Activated CD4-positive, alpha-beta memory T cell treated with anti-CD3 and anti-CD28 coated beads for 36 hours (primary cell): ENCODE measurements at regions of chr17 and their contacts with region 1.

Region 1: GRCh38 chr17:72725433-72726068 is 366.9 kb downstream of the SLC39A11 start:
- DNase-seq: peak; percentile 71
- H3K4me3 Mint-ChIP-seq: no peak overlapping the region
- H3K27ac Mint-ChIP-seq: no peak overlapping the region
- H3K4me1 Mint-ChIP-seq: peaks cover 39% of the 10 kb centered on the region
- H3K27me3 Mint-ChIP-seq: no peaks in the 10 kb centered on the region

Region 2: DNA sequence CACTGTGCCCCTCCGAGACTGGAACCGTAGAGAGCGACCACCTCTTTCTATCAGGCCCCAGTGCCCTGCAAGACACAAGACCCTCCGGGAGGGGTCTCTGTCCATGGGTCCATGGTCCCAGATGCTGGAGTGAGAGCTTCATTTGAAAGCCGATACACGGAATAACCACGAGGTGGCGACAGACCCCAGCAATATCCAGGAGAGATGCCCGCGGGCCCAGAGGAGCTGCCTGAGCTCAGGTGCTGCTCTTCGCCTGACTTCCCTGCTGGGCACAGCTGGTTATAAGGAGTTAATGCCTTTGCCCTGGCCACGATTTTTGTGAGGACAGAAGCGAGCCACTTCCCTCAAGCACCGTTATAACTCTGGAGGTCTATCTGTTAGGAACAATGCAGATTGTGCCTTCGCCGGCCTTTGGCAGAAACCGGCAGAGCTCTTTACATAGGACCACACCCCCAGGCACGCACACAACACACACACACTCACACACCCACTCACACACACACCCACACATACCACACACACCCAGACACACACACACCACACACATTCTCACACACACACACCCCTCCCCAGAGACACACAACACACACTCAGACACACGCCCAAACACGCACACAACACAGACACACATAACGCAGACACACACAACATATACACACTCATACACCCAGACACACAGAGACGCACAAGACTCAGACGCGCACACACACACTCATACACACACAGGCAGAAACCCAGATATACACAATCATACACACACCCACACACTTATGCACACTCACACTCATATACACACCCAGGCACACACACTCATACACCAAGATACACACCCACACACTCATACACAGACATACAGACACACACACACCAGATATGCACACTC is 168.4 kb before region 1 on chr17:
- CTCF ChIA-PET with region 1: interaction called, 196 read pairs
- POLR2A ChIA-PET with region 1: no interaction called
- intact Hi-C with region 1: loop called (anchors 1 kb)
- DNase-seq: peak; percentile 79
- H3K4me3 Mint-ChIP-seq: no peak overlapping the region
- H3K27ac Mint-ChIP-seq: no peak overlapping the region
- H3K4me1 Mint-ChIP-seq: no peaks in the 10 kb centered on the region
- H3K27me3 Mint-ChIP-seq: peaks cover 1% of the 10 kb centered on the region

Region 3: GRCh38 chr17:72931163-72931562 is 205.6 kb after region 1 on chr17:
- CTCF ChIA-PET with region 1: no interaction called
- POLR2A ChIA-PET with region 1: no interaction called
- intact Hi-C with region 1: loop called (anchors 5 kb)
- DNase-seq: peak; percentile 40
- H3K4me3 Mint-ChIP-seq: no peak overlapping the region
- H3K27ac Mint-ChIP-seq: no peak overlapping the region
- H3K4me1 Mint-ChIP-seq: peaks cover 21% of the 10 kb centered on the region
- H3K27me3 Mint-ChIP-seq: no peaks in the 10 kb centered on the region

Region 4: DNA sequence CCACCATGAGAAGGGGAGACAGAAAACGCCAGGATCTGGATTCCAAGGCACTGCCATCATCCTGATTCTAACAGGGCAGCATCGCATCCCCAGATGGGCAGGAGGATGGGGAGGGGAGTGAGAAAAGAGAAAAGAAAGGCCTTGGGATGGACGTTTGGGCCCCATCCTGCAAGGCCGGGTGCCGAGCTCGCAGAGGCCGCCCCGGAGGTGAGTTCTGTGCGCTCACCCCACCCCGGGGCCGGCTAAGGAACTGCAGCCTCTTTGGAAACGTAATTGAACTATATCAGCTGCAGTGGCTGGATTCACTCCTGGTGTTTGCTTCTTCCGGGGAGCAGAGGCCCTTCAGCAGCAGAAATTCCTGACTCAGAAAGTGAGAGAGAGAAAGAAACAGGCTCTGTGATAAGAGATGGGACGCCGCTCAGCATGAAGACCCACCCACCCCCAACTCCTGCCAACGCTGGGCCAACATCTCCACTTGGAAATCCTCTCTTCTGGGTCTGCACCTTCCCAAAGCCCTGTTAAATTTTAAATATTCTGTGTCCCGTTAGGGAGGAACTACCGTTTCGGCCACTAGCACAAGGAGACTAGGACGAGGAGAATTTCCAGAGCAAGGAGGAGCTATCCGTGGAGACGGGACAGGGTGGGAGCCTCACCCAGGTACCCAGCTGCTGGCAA is 430.8 kb after region 1 on chr17:
- CTCF ChIA-PET with region 1: interaction called, 100 read pairs
- POLR2A ChIA-PET with region 1: interaction called, 3 read pairs
- intact Hi-C with region 1: loop called (anchors 1 kb)
- DNase-seq: peak; percentile 73
- H3K4me3 Mint-ChIP-seq: no peak overlapping the region
- H3K27ac Mint-ChIP-seq: no peak overlapping the region
- H3K4me1 Mint-ChIP-seq: peaks cover 19% of the 10 kb centered on the region
- H3K27me3 Mint-ChIP-seq: peaks cover 26% of the 10 kb centered on the region

Region 5: DNA sequence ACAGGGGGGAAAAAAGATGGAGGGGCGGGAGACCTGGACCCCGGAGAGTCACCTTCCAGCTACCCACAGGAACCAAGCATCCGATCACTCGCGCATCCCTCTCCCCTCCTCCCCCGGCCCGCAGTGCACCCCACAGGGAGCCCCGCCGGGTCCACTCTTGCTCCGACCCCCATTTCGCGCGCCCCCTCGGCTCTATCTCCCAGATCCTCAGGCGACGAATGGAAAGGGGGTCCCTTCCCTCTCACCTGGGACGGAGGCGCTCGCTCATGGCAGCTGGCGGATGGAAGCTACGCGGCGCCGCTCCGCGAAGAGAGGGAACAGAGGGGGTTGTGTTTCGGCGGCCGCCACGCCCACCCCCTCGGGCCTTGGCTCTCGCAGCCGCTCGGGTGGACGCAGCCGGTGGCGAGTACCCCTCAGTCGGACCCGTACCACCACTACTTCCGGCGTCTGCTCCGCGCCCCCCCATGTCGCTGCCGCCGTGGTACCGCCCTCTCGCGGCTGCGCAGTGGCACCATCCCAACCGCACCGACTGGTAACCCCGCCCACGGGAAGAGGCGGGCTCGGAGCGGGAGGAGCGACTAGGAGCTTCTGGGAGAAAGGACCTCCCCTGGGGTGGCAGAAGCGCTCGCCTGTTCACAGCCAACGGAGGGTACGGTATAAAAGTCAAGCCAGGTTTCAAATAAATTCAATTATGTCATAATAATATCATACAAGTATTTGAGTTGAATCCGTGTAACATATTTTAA is 506.5 kb after region 1 on chr17:
- CTCF ChIA-PET with region 1: interaction called, 11 read pairs
- POLR2A ChIA-PET with region 1: interaction called, 3 read pairs
- intact Hi-C with region 1: loop called (anchors 2 kb)
- DNase-seq: peak; percentile 98
- H3K4me3 Mint-ChIP-seq: peak overlapping the region; percentile 94
- H3K27ac Mint-ChIP-seq: peak overlapping the region; percentile 94
- H3K4me1 Mint-ChIP-seq: peaks cover 50% of the 10 kb centered on the region
- H3K27me3 Mint-ChIP-seq: no peaks in the 10 kb centered on the region

Region 6: GRCh38 chr17:73371285-73371684 is 645.7 kb after region 1 on chr17:
- CTCF ChIA-PET with region 1: interaction called, 104 read pairs
- POLR2A ChIA-PET with region 1: no interaction called
- intact Hi-C with region 1: loop called (anchors 1 kb)
- DNase-seq: no peak
- H3K4me3 Mint-ChIP-seq: no peak overlapping the region
- H3K27ac Mint-ChIP-seq: no peak overlapping the region
- H3K4me1 Mint-ChIP-seq: no peaks in the 10 kb centered on the region
- H3K27me3 Mint-ChIP-seq: peaks cover 6% of the 10 kb centered on the region